AG04450 (cell line): ENCODE measurements at regions of chr17 and their contacts with region 1.

Region 1: DNA sequence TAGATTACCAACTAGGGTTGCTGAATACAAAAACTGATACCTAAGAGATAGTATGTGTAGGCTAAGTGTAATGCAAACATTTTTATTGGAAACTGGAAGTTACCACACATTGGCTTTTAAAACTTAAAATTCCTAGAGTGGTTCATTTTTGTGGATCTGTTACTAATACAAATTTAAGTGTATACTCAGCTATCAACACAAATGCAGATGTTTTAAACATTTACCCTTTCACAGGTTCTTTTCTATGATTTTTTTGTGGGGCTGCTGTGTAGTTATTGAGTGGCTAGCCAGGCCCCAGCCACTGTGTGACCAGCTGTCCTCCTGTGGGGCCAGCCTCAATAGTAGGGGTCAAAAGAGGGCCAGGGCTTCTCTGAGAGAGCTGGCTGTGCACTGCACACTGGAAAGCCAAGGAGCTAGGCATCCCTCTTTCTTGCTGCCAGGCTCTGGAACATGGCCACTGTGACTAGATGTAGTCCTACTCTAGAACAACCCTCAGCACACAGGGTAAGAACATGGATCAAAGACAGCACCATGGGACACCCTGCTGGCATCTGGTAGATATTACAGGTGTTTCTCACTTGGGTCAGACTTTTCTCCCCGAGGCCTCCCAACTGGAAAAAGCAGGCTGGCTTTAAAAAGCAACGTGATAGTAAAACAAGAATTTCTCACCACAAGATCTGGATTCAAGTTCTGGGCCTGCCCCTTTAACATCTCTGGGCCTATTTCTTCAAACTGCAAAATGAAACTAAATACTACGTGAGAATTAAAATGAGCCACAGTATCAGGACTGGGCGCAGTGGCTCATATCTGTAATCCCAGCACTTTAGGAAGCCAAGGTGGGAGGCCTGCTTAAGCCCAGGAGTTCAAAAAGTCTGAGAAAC is 7.3 kb upstream of the VEZF1 start:
- DNase-seq: peak; percentile 59
- H3K4me3 ChIP-seq: no peak overlapping the region
- H3K27ac ChIP-seq: no peak overlapping the region
- H3K27me3 ChIP-seq: no peaks in the 10 kb centered on the region
- CTCF ChIP-seq: peak; percentile 73

Region 2: DNA sequence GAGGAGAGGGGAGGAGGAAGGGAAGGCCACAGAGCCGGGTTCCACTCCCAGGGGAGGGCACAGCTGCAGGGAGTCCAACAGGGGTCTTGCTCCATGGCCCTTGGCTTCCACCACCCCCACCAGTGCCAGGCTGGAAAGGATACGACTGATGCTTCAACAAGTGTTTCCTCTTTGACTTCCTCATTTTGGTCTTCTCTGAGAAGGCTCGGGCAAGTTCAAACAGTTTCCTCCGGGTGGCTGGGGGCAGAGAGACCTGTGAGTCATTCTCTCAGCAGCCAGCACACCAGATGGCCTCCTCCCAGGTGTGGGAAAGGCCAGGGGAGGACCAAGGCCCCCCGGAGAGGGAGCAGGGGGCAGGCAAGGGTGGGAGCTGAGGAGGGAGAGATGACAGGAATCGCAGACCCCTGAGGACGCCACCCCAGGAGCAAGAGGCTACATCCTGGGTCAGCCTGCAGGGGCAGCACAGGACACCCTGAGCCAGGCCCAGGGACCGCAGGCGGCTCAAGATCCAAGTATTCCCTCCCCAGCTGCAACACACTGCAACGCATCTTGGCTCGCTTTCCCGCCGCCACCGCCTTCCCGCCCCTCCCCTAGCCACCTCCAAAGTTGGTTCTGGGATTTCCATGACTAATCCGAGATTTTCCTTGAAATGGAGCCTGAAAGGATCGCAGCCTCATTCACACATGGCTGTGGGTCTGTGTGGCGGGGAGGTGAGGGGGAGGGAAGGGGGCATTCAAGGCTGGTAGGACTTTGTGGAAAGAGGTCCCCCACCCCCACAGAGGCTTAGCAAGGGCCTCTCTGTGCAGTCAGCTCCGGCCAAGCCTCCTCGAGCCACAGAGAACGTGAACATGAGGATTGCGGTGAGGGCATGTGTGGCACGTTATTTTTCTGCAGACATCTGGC is 127.1 kb before region 1 on chr17:
- CTCF ChIA-PET with region 1: interaction called, 661 read pairs
- POLR2A ChIA-PET with region 1: interaction called, 5 read pairs
- DNase-seq: peak; percentile 71
- H3K4me3 ChIP-seq: peak overlapping the region; percentile 25; the same call in 1 of the 2 replicates
- H3K27ac ChIP-seq: peak overlapping the region; percentile 99
- H3K27me3 ChIP-seq: no peaks in the 10 kb centered on the region
- CTCF ChIP-seq: peak; percentile 58

Region 3: GRCh38 chr17:57892146-57892828 is 103.0 kb before region 1 on chr17:
- CTCF ChIA-PET with region 1: interaction called, 40 read pairs
- POLR2A ChIA-PET with region 1: interaction called, 3 read pairs
- DNase-seq: peak; percentile 72
- H3K4me3 ChIP-seq: no peak overlapping the region
- H3K27ac ChIP-seq: peak overlapping the region; percentile 98
- H3K27me3 ChIP-seq: no peaks in the 10 kb centered on the region
- CTCF ChIP-seq: peak; percentile 99

Region 4: DNA sequence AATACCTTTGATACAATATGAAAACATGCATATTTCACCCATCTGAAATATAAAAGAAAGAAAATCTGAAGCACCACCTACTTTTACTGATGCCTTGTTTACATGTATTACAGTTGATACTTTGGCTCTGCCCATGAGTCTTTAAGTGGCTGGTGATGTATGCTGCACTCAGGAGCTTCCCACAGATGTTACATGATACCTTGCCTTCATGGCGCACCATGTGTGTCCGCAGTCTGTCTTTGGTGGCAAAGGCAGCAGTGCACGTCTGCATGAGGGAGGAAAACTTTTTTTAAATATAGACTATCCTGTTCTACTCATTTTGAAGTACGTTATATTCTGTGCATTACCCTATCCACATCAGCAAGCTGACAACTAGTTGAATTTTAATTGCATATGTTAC is 14.8 kb before region 1 on chr17:
- CTCF ChIA-PET with region 1: interaction called, 27 read pairs
- POLR2A ChIA-PET with region 1: interaction called, 4 read pairs
- DNase-seq: no peak
- H3K4me3 ChIP-seq: no peak overlapping the region
- H3K27ac ChIP-seq: no peak overlapping the region
- H3K27me3 ChIP-seq: no peaks in the 10 kb centered on the region
- CTCF ChIP-seq: no peak

Region 5: DNA sequence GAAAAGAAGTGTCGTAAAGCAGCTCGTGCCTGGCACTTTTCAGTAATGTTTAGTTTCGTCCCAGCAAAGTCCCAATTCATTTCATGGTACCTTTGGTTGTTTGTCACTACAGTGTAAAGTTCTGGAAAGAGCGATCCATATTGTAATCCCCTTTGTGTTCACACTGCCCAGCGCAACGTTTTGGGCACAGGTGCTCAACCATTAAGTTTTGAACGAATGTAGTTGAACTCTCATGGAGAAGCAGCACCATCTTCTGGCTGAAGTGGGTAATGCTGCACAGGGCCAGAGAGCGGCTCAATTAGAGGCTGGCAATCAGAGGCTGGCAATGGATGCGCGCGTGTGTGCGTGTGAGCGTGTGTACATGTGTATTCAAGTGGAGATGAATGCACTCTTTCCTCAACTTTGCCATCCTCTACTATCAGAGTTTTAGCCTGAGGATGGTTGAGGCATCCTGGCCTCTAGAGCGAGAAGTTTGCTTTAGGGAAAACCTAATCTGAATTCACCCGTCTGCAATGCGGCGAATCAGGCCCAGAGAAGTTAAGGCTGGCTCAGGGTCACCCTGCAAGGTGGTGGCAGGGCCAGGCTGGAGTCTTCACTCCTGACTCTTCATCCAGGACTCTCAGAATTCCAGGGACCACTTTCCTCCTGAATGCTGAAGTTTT is 117.8 kb after region 1 on chr17:
- CTCF ChIA-PET with region 1: interaction called, 36 read pairs
- POLR2A ChIA-PET with region 1: no interaction called
- DNase-seq: no peak
- H3K4me3 ChIP-seq: no peak overlapping the region
- H3K27ac ChIP-seq: peak overlapping the region; percentile 11
- H3K27me3 ChIP-seq: peaks cover 9% of the 10 kb centered on the region
- CTCF ChIP-seq: peak; percentile 96

Region 6: DNA sequence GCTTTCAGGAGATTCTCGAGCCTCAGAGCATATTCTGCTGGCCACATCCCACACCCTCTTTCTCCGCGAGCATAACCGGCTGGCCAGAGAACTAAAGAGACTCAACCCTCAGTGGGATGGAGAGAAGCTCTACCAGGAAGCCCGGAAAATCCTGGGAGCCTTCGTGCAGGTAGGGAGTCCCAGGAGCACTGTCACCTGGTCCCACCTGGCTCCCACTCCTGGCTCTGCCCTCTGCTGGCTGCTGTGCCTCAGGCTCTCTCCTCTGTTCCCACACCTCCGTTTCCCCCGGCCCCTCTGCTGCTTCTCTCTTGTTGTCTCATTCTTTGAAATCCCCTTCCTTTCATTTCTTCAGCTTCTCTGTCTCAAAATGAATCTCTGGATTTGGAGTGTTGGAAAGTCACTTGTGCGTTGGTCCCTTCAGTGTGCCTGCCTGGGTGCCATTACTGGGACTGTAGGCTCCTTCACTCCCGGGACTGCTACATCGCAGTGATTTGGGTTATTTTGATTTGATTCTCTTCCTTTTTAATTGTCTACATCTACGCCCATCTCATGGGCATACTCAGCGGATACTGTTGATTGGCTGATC is 259.6 kb after region 1 on chr17:
- CTCF ChIA-PET with region 1: no interaction called
- POLR2A ChIA-PET with region 1: no interaction called
- DNase-seq: no peak
- H3K4me3 ChIP-seq: no peak overlapping the region
- H3K27ac ChIP-seq: no peak overlapping the region
- H3K27me3 ChIP-seq: peaks cover 27% of the 10 kb centered on the region
- CTCF ChIP-seq: no peak